T-cell (primary cell): ENCODE measurements at regions of chr9 and their contacts with region 1.

Region 1: DNA sequence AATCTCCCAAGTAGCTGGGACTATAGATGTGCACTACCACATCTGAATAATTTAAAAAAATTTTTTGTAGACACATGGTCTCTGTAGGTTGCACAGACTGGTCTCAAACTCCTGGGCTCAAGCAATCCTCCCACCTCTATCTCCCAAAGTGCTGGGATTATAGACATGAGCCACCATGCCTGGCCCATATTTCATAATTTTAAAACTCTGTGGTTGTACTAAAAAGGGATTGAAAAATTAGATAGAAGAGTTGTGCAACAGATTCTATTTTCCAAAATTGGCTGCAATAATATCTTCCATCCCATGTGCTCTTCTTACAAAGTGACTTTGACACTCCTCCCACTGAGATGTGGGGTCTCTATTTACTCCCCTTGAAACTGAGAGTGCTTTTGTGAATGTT is 7.6 kb upstream of the UHRF2 start:
- DNase-seq: no peak
- ATAC-seq: no peak
- H3K4me3 ChIP-seq: no peak overlapping the region
- H3K4me3 Mint-ChIP-seq: no peak overlapping the region
- H3K27ac ChIP-seq: no peak overlapping the region
- H3K27ac Mint-ChIP-seq: no peak overlapping the region
- H3K4me1 ChIP-seq: no peaks in the 10 kb centered on the region
- H3K4me1 Mint-ChIP-seq: no peaks in the 10 kb centered on the region
- H3K27me3 ChIP-seq: no peaks in the 10 kb centered on the region
- H3K27me3 Mint-ChIP-seq: peaks cover 0 to 1% of the 10 kb centered on the region in 2 donors

Region 2: GRCh38 chr9:6384732-6385131 is 20.6 kb before region 1 on chr9:
- CTCF ChIA-PET with region 1: no interaction called
- POLR2A ChIA-PET with region 1: interaction called in 1 of 2 experiments, 11 read pairs
- DNase-seq: no peak
- ATAC-seq: no peak
- H3K4me3 ChIP-seq: no peak overlapping the region
- H3K4me3 Mint-ChIP-seq: no peak overlapping the region
- H3K27ac ChIP-seq: no peak overlapping the region
- H3K27ac Mint-ChIP-seq: no peak overlapping the region
- H3K4me1 ChIP-seq: no peaks in the 10 kb centered on the region
- H3K4me1 Mint-ChIP-seq: no peaks in the 10 kb centered on the region
- H3K27me3 ChIP-seq: no peaks in the 10 kb centered on the region
- H3K27me3 Mint-ChIP-seq: peaks cover 0 to 1% of the 10 kb centered on the region in 2 donors